ENCODE measurements at regions of chr7 and their contacts with region 1.

Region 1: DNA sequence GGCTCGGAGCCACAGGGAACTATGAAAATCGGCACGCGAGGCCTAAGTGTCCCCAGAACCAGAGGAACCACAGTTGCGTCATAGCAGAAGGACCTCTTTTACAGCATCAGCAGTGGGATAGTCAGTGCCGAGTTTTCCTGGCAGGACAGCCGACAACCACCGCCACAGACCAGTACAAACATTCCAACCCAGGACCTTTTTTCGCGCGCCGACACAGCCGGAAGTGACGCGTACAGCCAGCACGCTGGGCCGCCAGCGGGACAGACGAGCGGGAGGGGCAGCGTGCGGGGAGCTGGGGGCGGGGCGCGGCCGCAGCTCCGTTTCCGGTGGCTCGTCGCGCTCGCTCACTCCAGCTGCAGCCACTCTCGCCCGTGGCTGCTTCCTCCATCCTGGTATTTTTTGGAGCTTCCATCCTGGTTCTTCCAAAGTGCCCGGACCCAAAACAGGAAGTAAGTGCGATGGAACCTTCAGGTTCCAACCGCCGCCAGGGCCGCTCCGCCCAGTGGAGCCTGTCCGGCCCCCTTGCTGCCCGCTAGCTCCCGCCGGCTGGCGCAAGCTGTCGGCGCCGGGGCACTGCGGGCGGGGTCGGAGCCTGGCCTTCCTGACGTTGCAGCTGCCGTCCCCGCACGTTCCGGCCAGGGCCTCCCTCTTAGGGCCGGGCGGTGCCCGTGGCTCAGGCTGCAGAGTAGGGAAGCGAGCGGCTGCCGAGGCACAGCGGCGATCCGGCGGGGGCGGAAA is at the start of gene DMTF1:
- DNase-seq: peak; percentile 91 to 96 (median 94)
- H3K4me3 ChIP-seq: peak within 1 kb of the TSS; percentile 60 to 92 (median 82)
- H3K27ac ChIP-seq: peak within 1 kb of the TSS; percentile 92 to 100 (median 98)
- H3K27me3 ChIP-seq: no peaks in the 10 kb centered on the region
- CTCF ChIP-seq: peak in 30 of 56 donors; percentile 7 to 54 (median 28)
- total RNA-seq, gene DMTF1: 109 to 192 (median 149) TPM

Region 2: GRCh38 chr7:86926732-86927131 is 225.5 kb before region 1 on chr7:
- intact Hi-C with region 1: loop called (anchors 5 kb)
- DNase-seq: peak in 3 of 10 donors; percentile 5 to 53 (median 34)
- H3K4me3 ChIP-seq: no peak overlapping the region
- H3K27ac ChIP-seq: peak overlapping the region in 8 of 59 donors; percentile 16 to 43 (median 30)
- H3K27me3 ChIP-seq: no peaks in the 10 kb centered on the region
- CTCF ChIP-seq: peak; percentile 60 to 93 (median 76)

Region 3: GRCh38 chr7:87219545-87220025 is 67.3 kb after region 1 on chr7 and contains the start of gene TMEM243:
- intact Hi-C with region 1: loop called (anchors 1 kb)
- DNase-seq: peak; percentile 35 to 81 (median 57)
- H3K4me3 ChIP-seq: peak within 1 kb of the TSS; percentile 60 to 99 (median 90)
- H3K27ac ChIP-seq: peak within 1 kb of the TSS; percentile 28 to 90 (median 80)
- H3K27me3 ChIP-seq: no peaks in the 10 kb centered on the region
- CTCF ChIP-seq: peak in 15 of 56 donors; percentile 10 to 44 (median 29)
- total RNA-seq, gene TMEM243: 9.4 to 33.2 (median 21.5) TPM

Region 4: DNA sequence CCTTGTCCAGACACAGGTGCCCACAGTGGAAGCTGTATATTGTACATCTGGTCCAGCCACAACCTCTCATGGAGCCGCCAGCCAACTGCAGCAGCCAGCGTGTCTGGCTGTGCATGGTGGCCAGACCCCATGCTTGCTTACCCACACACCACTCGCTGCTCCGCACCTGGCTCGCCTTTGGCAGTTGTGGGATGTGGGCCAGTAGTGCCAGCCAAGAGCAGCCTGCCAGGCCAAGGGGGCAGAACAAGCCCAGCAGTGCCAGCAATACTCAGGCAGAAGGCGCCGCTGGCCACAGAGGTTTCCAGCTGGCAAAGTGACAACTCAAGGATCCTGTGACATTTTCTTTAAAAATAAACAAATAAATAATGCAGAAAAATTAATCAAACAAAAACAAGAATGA is 79.0 kb after region 1 on chr7:
- intact Hi-C with region 1: loop called in 1 of 2 experiments (anchors 5 kb)
- DNase-seq: peak in 7 of 10 donors; percentile 14 to 70 (median 47)
- H3K4me3 ChIP-seq: no peak overlapping the region
- H3K27ac ChIP-seq: peak overlapping the region in 5 of 59 donors; percentile 4 to 69 (median 48)
- H3K27me3 ChIP-seq: no peaks in the 10 kb centered on the region
- CTCF ChIP-seq: no peak

Measured in dorsolateral prefrontal cortex (tissue), 120 donors.